ENCODE measurements at regions of chr6 and their contacts with region 1.

Region 1: GRCh38 chr6:27809939-27810767 is 102.0 kb downstream of the OR2B2 start:
- DNase-seq: peak; percentile 63 to 96 (median 74)
- ATAC-seq: peak; percentile 60
- H3K4me3 ChIP-seq: peak overlapping the region; percentile 52 to 65
- H3K4me3 Mint-ChIP-seq: peak overlapping the region; percentile 95
- H3K27ac ChIP-seq: peak overlapping the region; percentile 83 to 87
- H3K27ac Mint-ChIP-seq: peak overlapping the region; percentile 99
- H3K4me1 ChIP-seq: peaks cover 36% of the 10 kb centered on the region
- H3K4me1 Mint-ChIP-seq: peaks cover 57% of the 10 kb centered on the region
- H3K27me3 ChIP-seq: no peaks in the 10 kb centered on the region
- H3K27me3 Mint-ChIP-seq: no peaks in the 10 kb centered on the region
- CTCF ChIP-seq: no peak

Region 2: DNA sequence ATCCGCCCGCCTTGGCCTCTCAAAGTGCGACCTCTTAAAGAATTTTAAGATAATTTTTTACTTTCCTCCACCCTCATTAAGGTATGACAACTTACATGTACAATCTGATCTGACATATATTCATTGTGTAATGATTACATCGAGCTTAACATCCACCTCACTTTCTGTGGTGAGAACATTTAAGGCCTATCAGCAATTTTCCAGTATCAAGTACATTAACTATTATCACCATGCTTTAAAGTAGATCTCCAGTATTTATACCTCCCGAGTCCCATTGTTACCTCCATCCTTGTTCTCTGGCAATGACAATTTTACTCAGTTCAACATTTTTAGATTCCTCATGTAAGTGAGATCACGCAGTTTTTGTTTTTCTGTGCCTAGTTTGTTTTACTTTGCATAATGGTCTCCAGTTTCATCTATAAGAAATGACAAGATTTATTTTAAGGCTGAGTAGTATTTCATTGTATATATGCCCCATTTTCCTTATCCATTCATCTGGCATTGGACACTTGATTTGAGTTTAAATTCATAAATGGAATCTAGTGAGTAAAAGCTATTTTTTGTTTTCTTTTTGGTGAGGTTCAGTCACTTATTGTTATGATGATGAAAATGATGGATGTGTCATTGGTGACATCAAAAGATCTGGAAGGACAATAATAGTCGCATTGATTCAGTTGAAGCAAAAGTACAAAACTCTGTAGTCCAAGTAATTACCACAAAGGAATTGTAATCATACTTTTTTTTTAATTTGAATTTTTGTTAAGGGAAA is 15.1 kb after region 1 on chr6:
- CTCF ChIA-PET with region 1: interaction called, 5 read pairs
- POLR2A ChIA-PET with region 1: interaction called, 128 read pairs
- intact Hi-C with region 1: no loop called
- DNase-seq: peak in 1 of 9 experiments; percentile 45
- ATAC-seq: peak; percentile 6
- H3K4me3 ChIP-seq: peak overlapping the region; percentile 55 to 76
- H3K4me3 Mint-ChIP-seq: peak overlapping the region; percentile 89
- H3K27ac ChIP-seq: peak overlapping the region; percentile 81 to 91
- H3K27ac Mint-ChIP-seq: peak overlapping the region; percentile 99
- H3K4me1 ChIP-seq: peaks cover 24% of the 10 kb centered on the region
- H3K4me1 Mint-ChIP-seq: peaks cover 32% of the 10 kb centered on the region
- H3K27me3 ChIP-seq: no peaks in the 10 kb centered on the region
- H3K27me3 Mint-ChIP-seq: no peaks in the 10 kb centered on the region
- CTCF ChIP-seq: no peak

Region 3: GRCh38 chr6:27864906-27865849 is 55.0 kb after region 1 on chr6:
- CTCF ChIA-PET with region 1: interaction called, 29 read pairs
- POLR2A ChIA-PET with region 1: interaction called, 367 read pairs
- intact Hi-C with region 1: no loop called
- DNase-seq: peak; percentile 37 to 97 (median 56)
- ATAC-seq: peak; percentile 83
- H3K4me3 ChIP-seq: peak overlapping the region; percentile 71 to 79
- H3K4me3 Mint-ChIP-seq: peak overlapping the region; percentile 95
- H3K27ac ChIP-seq: peak overlapping the region; percentile 67 to 83
- H3K27ac Mint-ChIP-seq: peak overlapping the region; percentile 94
- H3K4me1 ChIP-seq: peaks cover 17% of the 10 kb centered on the region
- H3K4me1 Mint-ChIP-seq: peaks cover 38% of the 10 kb centered on the region
- H3K27me3 ChIP-seq: no peaks in the 10 kb centered on the region
- H3K27me3 Mint-ChIP-seq: no peaks in the 10 kb centered on the region
- CTCF ChIP-seq: no peak

Region 4: DNA sequence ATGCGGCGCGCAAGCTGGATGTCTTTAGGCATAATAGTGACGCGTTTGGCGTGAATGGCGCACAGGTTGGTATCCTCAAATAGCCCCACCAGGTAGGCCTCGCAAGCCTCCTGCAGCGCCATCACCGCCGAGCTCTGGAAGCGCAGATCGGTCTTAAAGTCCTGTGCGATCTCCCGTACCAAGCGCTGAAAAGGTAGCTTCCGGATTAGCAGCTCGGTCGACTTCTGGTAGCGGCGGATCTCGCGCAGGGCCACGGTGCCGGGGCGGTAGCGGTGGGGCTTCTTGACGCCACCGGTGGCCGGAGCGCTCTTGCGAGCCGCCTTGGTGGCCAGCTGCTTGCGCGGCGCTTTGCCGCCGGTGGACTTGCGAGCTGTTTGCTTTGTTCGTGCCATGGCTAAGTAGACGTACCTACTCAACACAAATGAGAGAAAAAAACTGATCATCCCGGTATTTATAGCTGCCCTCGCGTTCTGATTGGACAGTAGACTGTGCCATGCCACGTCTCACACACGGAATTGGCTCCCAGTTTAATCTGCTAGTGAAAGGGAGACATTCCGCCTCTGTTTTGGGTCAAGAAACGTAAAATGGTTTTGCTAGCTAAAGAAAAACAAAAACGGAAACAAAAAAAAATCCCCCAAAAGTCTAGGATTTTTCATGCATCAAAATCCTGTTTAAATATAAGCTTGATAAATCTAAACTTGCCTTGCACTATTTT is 61.9 kb after region 1 on chr6:
- CTCF ChIA-PET with region 1: interaction called, 29 read pairs
- POLR2A ChIA-PET with region 1: interaction called, 367 read pairs
- intact Hi-C with region 1: loop called (anchors 1 kb)
- DNase-seq: peak; percentile 72 to 97 (median 85)
- ATAC-seq: peak; percentile 75
- H3K4me3 ChIP-seq: peak overlapping the region; percentile 54 to 67
- H3K4me3 Mint-ChIP-seq: peak overlapping the region; percentile 82
- H3K27ac ChIP-seq: peak overlapping the region; percentile 81 to 86
- H3K27ac Mint-ChIP-seq: peak overlapping the region; percentile 98
- H3K4me1 ChIP-seq: peaks cover 20% of the 10 kb centered on the region
- H3K4me1 Mint-ChIP-seq: peaks cover 36% of the 10 kb centered on the region
- H3K27me3 ChIP-seq: peaks cover 0 to 3% of the 10 kb centered on the region in 2 experiments
- H3K27me3 Mint-ChIP-seq: no peaks in the 10 kb centered on the region
- CTCF ChIP-seq: peak; percentile 48